KBM-7 (cell line): ENCODE measurements at regions of chr12 and their contacts with region 1.

Region 1: GRCh38 chr12:75526655-75527511 is 15.5 kb upstream of the KRR1 start:
- DNase-seq: peak; percentile 81

Region 2: GRCh38 chr12:74791365-74791764 is 735.5 kb before region 1 on chr12:
- in situ Hi-C with region 1: no loop called
- DNase-seq: no peak

Region 3: GRCh38 chr12:76031537-76032073 is 504.7 kb after region 1 on chr12 and contains the start of gene PHLDA1:
- in situ Hi-C with region 1: loop called (anchors 25 kb)
- DNase-seq: peak; percentile 98

Region 4: DNA sequence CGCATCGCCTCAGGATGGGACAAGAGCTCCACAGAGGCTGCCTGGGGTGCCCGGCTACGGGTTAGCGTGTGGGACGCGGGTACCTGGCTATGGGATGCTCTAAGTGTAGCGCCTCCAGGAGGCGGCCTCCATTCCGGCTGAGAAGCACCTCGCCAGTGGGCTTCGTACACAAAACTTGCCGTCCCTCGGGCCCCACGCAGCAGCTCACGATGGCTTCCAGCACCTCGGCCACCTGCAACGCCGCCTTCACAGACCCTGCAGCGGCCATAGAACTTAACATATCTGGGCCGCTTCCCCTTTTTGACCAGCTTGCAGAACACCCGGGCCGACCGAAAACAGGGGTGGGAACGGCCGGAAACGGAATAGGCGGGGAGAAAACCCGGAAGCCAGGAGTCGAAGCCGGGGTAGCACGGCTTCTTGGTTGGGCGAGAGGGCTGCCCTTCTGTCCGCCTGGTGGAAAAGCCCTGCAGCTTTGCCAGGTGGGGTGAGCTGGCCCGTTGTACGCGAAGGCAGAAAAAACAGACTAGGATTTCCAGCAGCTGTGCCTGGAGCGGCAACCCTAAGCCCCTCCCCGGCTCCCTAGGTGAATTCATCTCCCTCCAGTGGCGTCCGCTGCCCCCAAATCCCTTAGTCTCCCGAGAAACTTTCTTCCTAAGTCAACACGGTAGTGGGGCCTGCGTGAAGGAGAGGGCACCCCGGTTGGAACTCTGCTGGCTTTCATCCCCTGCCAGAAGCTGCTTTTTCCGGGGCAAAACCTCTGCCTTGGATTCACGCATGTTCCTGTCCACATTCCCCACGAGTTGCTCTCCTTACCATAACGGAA is 821.4 kb after region 1 on chr12 and contains the start of gene BBS10:
- in situ Hi-C with region 1: loop called (anchors 25 kb)
- DNase-seq: peak; percentile 97